ENCODE measurements at regions of chr15 and their contacts with region 1.

Region 1: GRCh38 chr15:92528736-92529135 is 126.8 kb downstream of the FAM174B start:
- DNase-seq: no peak
- H3K4me3 ChIP-seq: no peak overlapping the region
- H3K27ac ChIP-seq: no peak overlapping the region
- H3K4me1 ChIP-seq: no peaks in the 10 kb centered on the region
- CTCF ChIP-seq: no peak

Region 2: DNA sequence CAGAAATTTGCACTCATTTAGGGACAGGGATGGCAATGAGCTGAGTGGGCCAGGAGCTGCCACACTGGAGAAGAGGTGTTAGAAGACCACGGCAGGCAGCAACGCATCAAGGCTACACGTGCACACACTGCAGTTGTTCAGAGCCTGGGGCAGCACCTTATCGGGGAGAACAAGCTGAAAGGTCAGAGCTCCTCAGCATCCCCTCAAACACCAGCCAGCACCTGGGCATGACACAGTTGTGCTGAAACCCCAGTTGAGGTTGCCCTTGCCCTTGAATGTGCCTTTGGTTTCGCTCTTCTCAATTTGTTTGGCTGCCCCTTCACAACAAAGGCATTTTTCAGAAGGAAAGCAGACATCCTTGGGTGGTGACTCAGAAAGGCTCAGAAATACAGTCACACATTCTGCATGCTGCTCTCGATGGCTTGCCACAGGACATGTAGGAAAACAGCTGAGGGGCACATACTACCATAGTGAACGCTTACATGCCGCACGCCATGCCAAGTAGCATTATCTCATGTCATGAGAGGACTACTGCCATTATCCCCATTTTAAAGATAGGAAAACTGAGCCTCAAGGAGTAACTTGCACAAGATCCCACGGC is 77.4 kb before region 1 on chr15:
- CTCF ChIA-PET with region 1: no interaction called
- POLR2A ChIA-PET with region 1: interaction called, 11 read pairs
- intact Hi-C with region 1: no loop called
- DNase-seq: no peak
- H3K4me3 ChIP-seq: no peak overlapping the region
- H3K27ac ChIP-seq: no peak overlapping the region
- H3K4me1 ChIP-seq: no peaks in the 10 kb centered on the region
- CTCF ChIP-seq: no peak

Region 3: DNA sequence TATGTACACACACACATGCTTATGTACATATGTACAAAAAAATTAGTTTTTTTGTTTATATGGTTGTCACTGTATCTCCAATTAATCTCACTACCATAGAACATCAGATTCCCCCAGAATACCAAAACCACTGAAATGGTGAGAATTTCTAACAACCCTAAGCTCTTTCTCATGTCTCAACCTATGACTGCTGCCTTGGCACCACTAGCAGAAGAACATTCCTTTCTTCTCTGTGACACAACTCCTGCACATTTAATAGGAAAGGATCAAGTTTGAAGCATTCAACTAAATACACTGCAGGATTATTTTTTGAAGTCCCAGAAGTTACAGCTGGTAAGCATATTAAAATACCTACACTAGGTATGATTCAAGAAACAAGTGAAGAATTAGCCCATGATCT is 17.3 kb after region 1 on chr15:
- CTCF ChIA-PET with region 1: no interaction called
- POLR2A ChIA-PET with region 1: no interaction called
- intact Hi-C with region 1: no loop called
- DNase-seq: no peak
- H3K4me3 ChIP-seq: no peak overlapping the region
- H3K27ac ChIP-seq: no peak overlapping the region
- H3K4me1 ChIP-seq: no peaks in the 10 kb centered on the region
- CTCF ChIP-seq: no peak

Measured in OCI-LY7 (cell line).